PC-3 (cell line): ENCODE measurements at regions of chr11 and their contacts with region 1.

Region 1: GRCh38 chr11:32176223-32176934 is 85.5 kb downstream of the RCN1 start:
- DNase-seq: peak; percentile 91
- ATAC-seq: peak; percentile 67
- H3K4me3 ChIP-seq: no peak overlapping the region
- H3K27ac ChIP-seq: no peak overlapping the region
- H3K4me1 ChIP-seq: no peaks in the 10 kb centered on the region
- H3K27me3 ChIP-seq: peaks cover 27% of the 10 kb centered on the region
- CTCF ChIP-seq: peak; percentile 84

Region 2: GRCh38 chr11:30346068-30346688 is 1830.2 kb before region 1 on chr11:
- CTCF ChIA-PET with region 1: no interaction called
- POLR2A ChIA-PET with region 1: no interaction called
- intact Hi-C with region 1: loop called (anchors 5 kb)
- DNase-seq: peak; percentile 64
- ATAC-seq: 0 out of 2 replicates have a peak, but pooled peaks have one; percentile 29
- H3K4me3 ChIP-seq: no peak overlapping the region
- H3K27ac ChIP-seq: no peak overlapping the region
- H3K4me1 ChIP-seq: no peaks in the 10 kb centered on the region
- H3K27me3 ChIP-seq: peaks cover 2% of the 10 kb centered on the region; the same call in 1 of the 2 replicates
- CTCF ChIP-seq: peak; percentile 70

Region 3: DNA sequence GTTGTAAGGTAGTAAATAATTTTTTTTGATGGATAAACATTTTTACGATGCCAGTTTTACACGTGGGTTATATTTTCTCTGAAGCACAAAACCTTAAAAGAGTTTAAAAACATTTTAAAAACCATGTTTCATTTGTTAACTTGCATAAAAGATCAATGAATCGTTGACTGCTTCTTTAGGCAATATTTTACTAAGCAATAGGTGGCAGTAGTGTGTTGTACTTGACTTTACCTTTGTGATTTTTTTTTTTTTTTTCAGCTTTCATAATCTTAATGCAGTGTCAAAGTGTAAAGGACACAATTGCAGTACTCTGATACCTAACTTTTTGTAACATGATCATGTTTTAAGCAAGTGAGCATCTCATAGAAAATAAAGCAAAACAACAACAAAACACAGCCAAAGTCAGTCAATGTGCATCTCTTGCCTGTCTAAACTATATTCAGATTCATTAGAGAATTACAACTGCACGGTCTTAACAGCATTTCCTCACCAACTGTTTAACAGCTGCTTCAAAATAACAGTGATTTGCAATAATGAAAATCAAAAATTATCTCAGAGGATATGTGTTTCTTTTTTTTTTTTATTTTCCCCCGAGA is 779.0 kb before region 1 on chr11:
- CTCF ChIA-PET with region 1: no interaction called
- POLR2A ChIA-PET with region 1: no interaction called
- intact Hi-C with region 1: loop called (anchors 10 kb)
- DNase-seq: peak; percentile 56
- ATAC-seq: no peak
- H3K4me3 ChIP-seq: no peak overlapping the region
- H3K27ac ChIP-seq: no peak overlapping the region
- H3K4me1 ChIP-seq: no peaks in the 10 kb centered on the region
- H3K27me3 ChIP-seq: no peaks in the 10 kb centered on the region
- CTCF ChIP-seq: peak; percentile 75

Region 4: DNA sequence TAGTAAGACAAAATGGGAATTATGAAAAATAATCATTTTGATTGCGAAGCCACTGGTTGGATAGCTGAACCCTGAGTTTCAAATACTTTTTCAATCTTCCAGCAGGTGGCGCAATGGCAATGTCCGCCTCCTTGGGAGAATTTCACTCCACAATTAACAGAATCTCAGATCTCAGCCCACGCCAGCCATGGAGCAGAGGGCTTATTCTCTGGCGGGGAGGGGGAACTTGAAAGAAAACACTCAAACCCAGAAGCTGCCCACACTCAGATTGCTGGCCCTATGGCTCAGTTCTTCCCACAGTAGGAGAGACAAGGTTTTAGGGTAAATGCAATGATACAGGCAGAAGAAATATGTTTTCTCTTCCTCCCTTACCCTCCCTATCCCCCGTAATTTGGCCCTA is 124.2 kb before region 1 on chr11:
- CTCF ChIA-PET with region 1: interaction called, 4 read pairs
- POLR2A ChIA-PET with region 1: interaction called, 3 read pairs
- intact Hi-C with region 1: loop called (anchors 1 kb)
- DNase-seq: peak; percentile 74
- ATAC-seq: peak; percentile 50
- H3K4me3 ChIP-seq: no peak overlapping the region
- H3K27ac ChIP-seq: no peak overlapping the region
- H3K4me1 ChIP-seq: no peaks in the 10 kb centered on the region
- H3K27me3 ChIP-seq: peaks cover 64% of the 10 kb centered on the region
- CTCF ChIP-seq: peak; percentile 81

Region 5: GRCh38 chr11:32118025-32118974 is 58.1 kb before region 1 on chr11:
- CTCF ChIA-PET with region 1: no interaction called
- POLR2A ChIA-PET with region 1: no interaction called
- intact Hi-C with region 1: no loop called
- DNase-seq: peak; percentile 78
- ATAC-seq: peak; percentile 92
- H3K4me3 ChIP-seq: peak overlapping the region; percentile 11; the same call in 1 of the 2 replicates
- H3K27ac ChIP-seq: peak overlapping the region; percentile 89
- H3K4me1 ChIP-seq: peaks cover 16% of the 10 kb centered on the region
- H3K27me3 ChIP-seq: no peaks in the 10 kb centered on the region
- CTCF ChIP-seq: no peak

Region 6: GRCh38 chr11:32213223-32213622 is 36.8 kb after region 1 on chr11:
- CTCF ChIA-PET with region 1: no interaction called
- POLR2A ChIA-PET with region 1: no interaction called
- intact Hi-C with region 1: no loop called
- DNase-seq: peak; percentile 37
- ATAC-seq: no peak
- H3K4me3 ChIP-seq: no peak overlapping the region
- H3K27ac ChIP-seq: no peak overlapping the region
- H3K4me1 ChIP-seq: peaks cover 14% of the 10 kb centered on the region
- H3K27me3 ChIP-seq: no peaks in the 10 kb centered on the region
- CTCF ChIP-seq: no peak

Region 7: DNA sequence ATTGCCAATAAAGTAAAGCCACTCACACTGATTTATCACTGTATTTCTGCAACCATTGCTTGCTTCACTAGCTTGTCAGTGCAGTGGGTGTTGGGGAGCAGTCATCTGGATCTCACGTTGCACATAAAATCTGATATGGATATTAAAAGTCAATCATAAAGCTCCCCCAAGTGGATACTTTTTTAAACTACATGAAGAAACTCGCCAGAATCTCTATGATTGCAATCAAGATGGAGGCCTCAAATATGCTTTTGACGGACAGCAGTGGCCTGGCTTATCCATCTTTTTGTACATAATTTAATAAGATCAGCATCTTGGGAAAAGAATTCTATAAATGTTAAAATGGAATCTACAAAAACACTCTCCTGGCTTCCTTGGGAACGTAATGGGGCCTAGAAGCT is 121.2 kb after region 1 on chr11:
- CTCF ChIA-PET with region 1: interaction called, 3 read pairs
- POLR2A ChIA-PET with region 1: no interaction called
- intact Hi-C with region 1: loop called (anchors 1 kb)
- DNase-seq: peak; percentile 72
- ATAC-seq: peak; percentile 58
- H3K4me3 ChIP-seq: no peak overlapping the region
- H3K27ac ChIP-seq: no peak overlapping the region
- H3K4me1 ChIP-seq: no peaks in the 10 kb centered on the region
- H3K27me3 ChIP-seq: no peaks in the 10 kb centered on the region
- CTCF ChIP-seq: peak; percentile 59